ENCODE measurements at regions of chr1 and their contacts with region 1.

Region 1: GRCh38 chr1:109993885-109994284 is 9.3 kb downstream of the AHCYL1 start:
- DNase-seq: no peak
- ATAC-seq: no peak
- H3K4me3 ChIP-seq: no peak overlapping the region
- H3K4me3 Mint-ChIP-seq: no peak overlapping the region
- H3K27ac ChIP-seq: no peak overlapping the region
- H3K27ac Mint-ChIP-seq: no peak overlapping the region
- H3K4me1 ChIP-seq: peaks cover 4 to 7% of the 10 kb centered on the region in 2 donors
- H3K4me1 Mint-ChIP-seq: peaks cover 21% of the 10 kb centered on the region
- H3K27me3 ChIP-seq: no peaks in the 10 kb centered on the region
- H3K27me3 Mint-ChIP-seq: no peaks in the 10 kb centered on the region
- CTCF ChIP-seq: no peak

Region 2: GRCh38 chr1:109864047-109864822 is 129.7 kb before region 1 on chr1:
- CTCF ChIA-PET with region 1: no interaction called
- POLR2A ChIA-PET with region 1: no interaction called
- intact Hi-C with region 1: no loop called
- DNase-seq: no peak
- ATAC-seq: no peak
- H3K4me3 ChIP-seq: no peak overlapping the region
- H3K4me3 Mint-ChIP-seq: no peak overlapping the region
- H3K27ac ChIP-seq: no peak overlapping the region
- H3K27ac Mint-ChIP-seq: no peak overlapping the region
- H3K4me1 ChIP-seq: no peaks in the 10 kb centered on the region
- H3K4me1 Mint-ChIP-seq: peaks cover 3% of the 10 kb centered on the region
- H3K27me3 ChIP-seq: peaks cover 0 to 2% (median 0%) of the 10 kb centered on the region in 4 experiments
- H3K27me3 Mint-ChIP-seq: peaks cover 18% of the 10 kb centered on the region
- CTCF ChIP-seq: no peak

Region 3: DNA sequence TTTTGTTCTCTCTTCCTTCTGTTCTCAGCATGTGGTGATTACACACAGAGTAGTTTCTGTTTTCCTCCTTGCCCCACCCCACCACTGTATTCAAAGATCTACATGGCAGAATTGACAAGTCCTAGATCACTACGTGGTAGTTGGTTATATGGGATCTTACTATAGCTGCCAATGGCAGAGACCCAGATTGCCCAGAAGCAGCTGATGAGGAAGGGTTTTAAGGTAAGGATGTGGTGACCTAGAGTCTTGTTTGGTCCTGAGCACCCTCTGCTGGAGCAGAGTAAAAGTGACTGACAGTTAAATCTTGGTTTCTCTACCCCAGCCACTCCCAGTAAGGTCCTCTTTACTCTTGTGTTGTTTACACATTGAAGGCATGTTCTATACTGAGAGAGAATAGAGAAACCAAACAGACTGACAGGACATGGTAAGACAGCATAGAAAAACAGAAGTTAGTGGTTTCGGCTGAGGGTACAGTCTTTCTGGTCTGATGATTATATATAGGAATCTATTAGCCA is 17.7 kb after region 1 on chr1:
- CTCF ChIA-PET with region 1: interaction called, 127 read pairs
- POLR2A ChIA-PET with region 1: no interaction called
- intact Hi-C with region 1: no loop called
- DNase-seq: peak; percentile 92
- ATAC-seq: peak; percentile 93
- H3K4me3 ChIP-seq: peak overlapping the region in 3 of 5 experiments; percentile 29 to 37 (median 34)
- H3K4me3 Mint-ChIP-seq: peak overlapping the region; percentile 82
- H3K27ac ChIP-seq: peak overlapping the region; percentile 93 to 94
- H3K27ac Mint-ChIP-seq: peak overlapping the region; percentile 98
- H3K4me1 ChIP-seq: peaks cover 25 to 27% of the 10 kb centered on the region in 2 donors
- H3K4me1 Mint-ChIP-seq: peaks cover 33% of the 10 kb centered on the region
- H3K27me3 ChIP-seq: no peaks in the 10 kb centered on the region
- H3K27me3 Mint-ChIP-seq: no peaks in the 10 kb centered on the region
- CTCF ChIP-seq: peak; percentile 79

Measured in B cell (primary cell).